Common myeloid progenitor, CD34-positive (primary cell): ENCODE measurements at regions of chrX and their contacts with region 1.

Region 1: DNA sequence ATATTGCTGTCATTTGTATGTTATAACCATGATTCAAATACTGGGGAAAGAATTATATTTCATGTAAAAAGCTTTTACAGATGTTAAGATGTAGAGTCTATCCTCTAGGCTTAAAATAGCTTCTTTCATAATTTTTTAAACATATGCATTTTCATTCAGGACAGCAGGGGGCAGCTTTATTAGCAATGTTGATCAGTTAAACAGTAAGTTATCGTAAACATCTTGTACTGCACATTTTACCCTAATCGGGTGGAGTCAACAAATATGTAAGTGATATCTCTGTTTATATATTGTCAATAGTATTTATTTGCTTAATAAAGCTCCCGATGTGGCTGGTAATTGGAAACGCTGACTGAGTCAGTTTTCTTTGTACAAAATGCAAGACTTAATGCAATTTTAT is 142.5 kb upstream of the MED14 start:
- DNase-seq: peak; percentile 42 to 53 (median 45)
- H3K4me3 ChIP-seq: peak overlapping the region in 1 of 7 experiments; percentile 28
- H3K27ac ChIP-seq: no peak overlapping the region
- H3K4me1 ChIP-seq: no peaks in the 10 kb centered on the region
- H3K27me3 ChIP-seq: peaks cover 0 to 7% (median 0%) of the 10 kb centered on the region in 5 experiments

Region 2: DNA sequence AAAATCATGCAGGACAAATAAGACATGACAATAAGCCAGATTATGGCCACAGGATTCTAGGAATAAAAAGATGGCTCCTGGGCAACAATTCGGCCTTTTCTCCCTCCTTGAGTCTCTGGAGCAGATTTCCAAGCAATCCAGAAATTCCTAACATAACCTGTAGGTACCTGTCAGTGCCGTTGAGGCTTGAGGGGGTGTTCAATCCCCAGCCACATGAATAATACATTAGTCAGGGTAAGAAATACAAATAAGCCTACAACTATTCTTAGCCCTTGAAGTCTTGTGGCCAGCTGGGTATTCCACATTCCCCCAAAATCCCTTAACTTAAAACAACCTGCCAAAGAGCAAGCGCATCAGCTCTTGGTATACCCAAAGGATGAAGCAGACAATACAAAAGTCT is 240.2 kb before region 1 on chrX:
- CTCF ChIA-PET with region 1: no interaction called
- POLR2A ChIA-PET with region 1: no interaction called
- DNase-seq: no peak
- H3K4me3 ChIP-seq: no peak overlapping the region
- H3K27ac ChIP-seq: no peak overlapping the region
- H3K4me1 ChIP-seq: peaks cover 0 to 6% (median 0%) of the 10 kb centered on the region in 4 experiments
- H3K27me3 ChIP-seq: peaks cover 0 to 24% (median 0%) of the 10 kb centered on the region in 5 experiments

Region 3: GRCh38 chrX:41116948-41117347 is 239.1 kb after region 1 on chrX:
- CTCF ChIA-PET with region 1: interaction called, 26 read pairs
- POLR2A ChIA-PET with region 1: no interaction called
- DNase-seq: peak in 2 of 3 donors; percentile 60 to 70
- H3K4me3 ChIP-seq: peak overlapping the region in 3 of 7 experiments; percentile 26 to 48 (median 35)
- H3K27ac ChIP-seq: no peak overlapping the region
- H3K4me1 ChIP-seq: peaks cover 0 to 7% (median 0%) of the 10 kb centered on the region in 4 experiments
- H3K27me3 ChIP-seq: no peaks in the 10 kb centered on the region